Prostate gland (tissue), 2 donors: ENCODE measurements at regions of chr15 and their contacts with region 1.

Region 1: DNA sequence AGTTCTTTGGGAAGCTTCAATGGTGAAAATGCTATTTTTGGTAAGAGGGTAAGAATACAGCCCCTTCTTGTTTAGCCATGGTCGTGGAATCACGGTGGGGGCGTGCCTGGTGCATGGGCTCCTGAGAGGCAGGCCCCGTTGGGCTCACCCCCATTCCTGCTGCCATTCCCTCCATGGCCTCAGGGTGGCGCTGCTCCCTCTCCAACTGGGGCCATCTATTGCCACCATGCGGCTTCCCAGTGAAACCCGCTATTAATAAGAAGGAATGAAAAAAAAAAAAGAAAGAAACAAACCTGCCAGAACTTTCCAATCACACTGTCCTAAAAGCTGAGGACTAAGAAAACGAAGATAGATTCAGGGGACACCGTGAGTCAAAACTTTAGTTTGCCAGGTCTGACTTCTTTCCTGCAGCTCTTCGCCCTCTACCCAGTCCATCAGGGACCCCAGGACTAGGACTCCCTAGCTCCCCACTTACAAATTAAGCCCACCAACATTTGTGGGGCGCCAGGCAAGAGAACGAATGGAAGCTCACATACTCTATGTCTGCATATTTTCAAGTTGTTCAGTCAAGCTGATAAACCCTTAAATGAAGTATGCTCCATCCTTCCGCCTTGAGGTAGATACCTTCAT is 30.6 kb upstream of the ABHD2 start:
- DNase-seq: peak; percentile 69
- H3K4me3 ChIP-seq: no peak overlapping the region
- H3K27ac ChIP-seq: no peak overlapping the region
- H3K4me1 ChIP-seq: no peaks in the 10 kb centered on the region
- H3K27me3 ChIP-seq: no peaks in the 10 kb centered on the region
- CTCF ChIP-seq: peak; percentile 93 to 99 (median 97)
- POLR2A ChIP-seq: no peak

Region 2: GRCh38 chr15:89130201-89130600 is 72.6 kb after region 1 on chr15:
- intact Hi-C with region 1: loop called (anchors 5 kb)
- DNase-seq: no peak
- H3K4me3 ChIP-seq: no peak overlapping the region
- H3K27ac ChIP-seq: peak overlapping the region; percentile 28 to 92
- H3K4me1 ChIP-seq: peaks cover 14% of the 10 kb centered on the region
- H3K27me3 ChIP-seq: no peaks in the 10 kb centered on the region
- CTCF ChIP-seq: no peak
- POLR2A ChIP-seq: no peak

Region 3: GRCh38 chr15:89177633-89178306 is 120.2 kb after region 1 on chr15:
- intact Hi-C with region 1: loop called (anchors 2 kb)
- DNase-seq: peak; percentile 64
- H3K4me3 ChIP-seq: no peak overlapping the region
- H3K27ac ChIP-seq: no peak overlapping the region
- H3K4me1 ChIP-seq: peaks cover 3% of the 10 kb centered on the region
- H3K27me3 ChIP-seq: no peaks in the 10 kb centered on the region
- CTCF ChIP-seq: peak; percentile 75 to 88 (median 87)
- POLR2A ChIP-seq: no peak